Left lung (tissue), 14 donors: ENCODE measurements at regions of chr1 and their contacts with region 1.

Region 1: DNA sequence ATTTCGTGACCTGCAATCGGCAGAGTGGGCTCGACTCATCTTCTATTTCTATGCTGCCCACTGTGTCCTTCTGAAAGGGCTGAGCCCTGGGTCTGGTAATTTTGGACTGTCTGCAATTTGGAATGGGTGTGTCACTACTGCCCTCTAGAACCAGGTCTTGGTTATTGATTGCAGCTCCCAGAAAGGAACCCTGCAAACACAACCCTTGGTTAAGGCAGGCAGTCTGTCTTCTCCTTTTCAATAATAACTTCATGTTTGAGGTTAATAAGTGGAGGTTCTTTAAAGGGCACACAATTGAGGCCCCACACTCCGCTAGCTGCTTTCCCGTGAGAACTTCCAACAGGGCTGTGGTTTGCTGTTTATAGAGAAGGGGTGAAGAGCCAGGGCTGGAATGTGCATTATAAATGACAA is 79.9 kb upstream of the LYST start:
- DNase-seq: no peak
- ATAC-seq: peak; percentile 64
- H3K4me3 ChIP-seq: no peak overlapping the region
- H3K27ac ChIP-seq: peak overlapping the region in 1 of 2 donors; percentile 92
- H3K4me1 ChIP-seq: peaks cover 0 to 77% of the 10 kb centered on the region in 2 donors
- H3K27me3 ChIP-seq: no peaks in the 10 kb centered on the region
- CTCF ChIP-seq: no peak

Region 2: GRCh38 chr1:235791532-235792060 is 155.0 kb before region 1 on chr1:
- intact Hi-C with region 1: no loop called
- DNase-seq: no peak
- ATAC-seq: no peak
- H3K4me3 ChIP-seq: no peak overlapping the region
- H3K27ac ChIP-seq: no peak overlapping the region
- H3K4me1 ChIP-seq: no peaks in the 10 kb centered on the region
- H3K27me3 ChIP-seq: no peaks in the 10 kb centered on the region
- CTCF ChIP-seq: no peak

Region 3: GRCh38 chr1:235866913-235867845 is 79.4 kb before region 1 on chr1:
- intact Hi-C with region 1: loop called in 1 of 2 experiments (anchors 10 kb)
- DNase-seq: peak; percentile 95 to 99 (median 98)
- ATAC-seq: peak; percentile 96
- H3K4me3 ChIP-seq: peak overlapping the region; percentile 90 to 96
- H3K27ac ChIP-seq: peak overlapping the region; percentile 97 to 99
- H3K4me1 ChIP-seq: peaks cover 10 to 48% of the 10 kb centered on the region in 2 donors
- H3K27me3 ChIP-seq: no peaks in the 10 kb centered on the region
- CTCF ChIP-seq: no peak

Region 4: DNA sequence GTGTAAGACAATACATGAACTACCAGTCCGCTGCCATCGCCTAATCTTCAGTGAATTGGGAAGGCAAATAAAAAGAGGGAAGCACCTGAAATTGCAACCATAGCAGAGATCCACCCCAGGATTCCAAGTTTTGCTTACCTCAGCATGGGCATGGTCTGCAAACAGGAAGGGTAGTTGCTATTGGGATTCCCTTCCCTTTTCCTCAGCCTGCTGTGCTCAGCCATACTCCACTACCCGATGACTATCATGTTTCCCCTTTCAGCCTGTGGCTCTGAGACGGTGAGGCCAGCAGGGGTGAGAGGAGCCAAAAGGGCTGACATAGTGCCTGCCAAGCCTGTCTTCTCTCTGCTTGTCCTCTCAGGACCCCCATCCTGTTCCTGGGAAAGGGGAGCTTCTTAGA is 260.0 kb after region 1 on chr1:
- intact Hi-C with region 1: no loop called
- DNase-seq: peak in 3 of 4 donors; percentile 0 to 60 (median 30)
- ATAC-seq: peak; percentile 91
- H3K4me3 ChIP-seq: no peak overlapping the region
- H3K27ac ChIP-seq: peak overlapping the region in 1 of 2 donors; percentile 35
- H3K4me1 ChIP-seq: peaks cover 0 to 4% of the 10 kb centered on the region in 2 donors
- H3K27me3 ChIP-seq: no peaks in the 10 kb centered on the region
- CTCF ChIP-seq: no peak